ENCODE measurements at regions of chr7 and their contacts with region 1.

Region 1: DNA sequence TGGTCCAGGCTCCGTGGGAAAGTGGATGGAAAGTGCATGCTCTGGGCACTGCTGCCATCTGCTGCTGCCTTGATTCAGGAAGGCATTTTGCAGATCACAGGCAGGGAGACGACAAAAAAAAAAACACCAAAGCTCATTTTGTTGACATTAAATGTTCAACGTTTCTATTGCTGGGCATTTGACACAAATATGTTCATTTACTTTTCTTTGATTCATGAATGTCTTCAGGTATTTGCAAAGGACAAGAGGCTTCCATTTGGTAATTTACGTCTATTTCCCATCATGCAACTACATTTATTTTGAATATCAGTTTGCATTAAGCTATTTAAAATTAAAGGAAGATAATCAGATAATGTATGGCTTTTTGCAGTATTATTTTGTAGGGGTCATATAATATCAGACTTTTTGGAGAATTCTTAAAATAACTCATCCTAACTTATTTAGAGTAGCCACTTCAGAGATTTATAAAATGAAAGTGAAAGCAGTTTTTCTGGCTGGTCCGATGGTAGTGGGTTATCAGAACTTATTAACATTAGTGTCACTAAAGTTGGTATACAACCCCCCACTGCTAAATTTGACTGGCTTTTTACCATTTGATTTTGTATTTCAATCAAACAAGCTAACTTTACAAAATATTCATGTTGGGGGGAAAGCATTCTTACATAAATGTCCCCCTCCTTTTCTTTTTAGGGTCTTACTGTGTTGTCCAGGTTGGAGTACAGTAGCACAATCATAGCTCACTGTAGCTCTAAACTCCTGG is 65.3 kb downstream of the PDIA4 start:
- DNase-seq: peak; percentile 51
- H3K4me3 Mint-ChIP-seq: peak overlapping the region; percentile 86
- H3K27ac Mint-ChIP-seq: peak overlapping the region; percentile 77
- H3K4me1 Mint-ChIP-seq: peaks cover 25% of the 10 kb centered on the region
- H3K27me3 Mint-ChIP-seq: no peaks in the 10 kb centered on the region

Region 2: GRCh38 chr7:148503875-148504487 is 459.0 kb before region 1 on chr7:
- intact Hi-C with region 1: loop called (anchors 1 kb)
- DNase-seq: no peak
- H3K4me3 Mint-ChIP-seq: no peak overlapping the region
- H3K27ac Mint-ChIP-seq: no peak overlapping the region
- H3K4me1 Mint-ChIP-seq: peaks cover 23% of the 10 kb centered on the region
- H3K27me3 Mint-ChIP-seq: peaks cover 32% of the 10 kb centered on the region

Region 3: DNA sequence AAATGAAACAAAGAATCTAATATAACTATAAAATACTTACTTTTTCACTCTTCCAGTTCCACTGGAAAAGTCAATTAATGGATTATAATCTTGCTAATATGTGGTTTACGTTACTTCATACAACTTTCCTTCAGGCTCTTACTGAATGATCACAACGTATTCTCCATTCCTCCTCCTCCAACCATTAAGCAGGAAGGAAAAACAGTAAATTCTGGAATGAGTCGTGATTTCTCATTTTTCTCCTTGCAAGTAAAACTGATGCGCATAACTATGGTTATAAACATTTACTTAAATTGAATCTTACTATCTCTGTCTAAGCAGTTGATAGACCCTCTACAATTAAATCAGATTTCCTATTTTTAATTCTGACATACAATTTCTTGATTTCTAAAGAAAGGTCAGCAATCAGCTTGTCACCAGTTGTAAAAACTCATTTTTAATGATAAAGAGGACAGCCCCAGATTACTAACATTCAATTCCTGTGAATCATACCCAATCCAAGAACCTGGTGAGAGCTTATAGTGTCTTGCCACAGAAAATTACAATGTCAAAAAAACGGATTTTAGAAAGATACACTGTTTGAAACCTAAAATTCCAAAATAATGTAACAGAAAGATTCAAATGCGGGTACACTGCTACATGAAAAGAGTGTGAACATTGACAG is 143.2 kb before region 1 on chr7:
- intact Hi-C with region 1: loop called (anchors 2 kb)
- DNase-seq: no peak
- H3K4me3 Mint-ChIP-seq: no peak overlapping the region
- H3K27ac Mint-ChIP-seq: no peak overlapping the region
- H3K4me1 Mint-ChIP-seq: peaks cover 5% of the 10 kb centered on the region
- H3K27me3 Mint-ChIP-seq: no peaks in the 10 kb centered on the region

Region 4: GRCh38 chr7:148849393-148850098 is 113.5 kb before region 1 on chr7:
- intact Hi-C with region 1: no loop called
- DNase-seq: no peak
- H3K4me3 Mint-ChIP-seq: no peak overlapping the region
- H3K27ac Mint-ChIP-seq: peak overlapping the region; percentile 31
- H3K4me1 Mint-ChIP-seq: peaks cover 61% of the 10 kb centered on the region
- H3K27me3 Mint-ChIP-seq: no peaks in the 10 kb centered on the region

Region 5: DNA sequence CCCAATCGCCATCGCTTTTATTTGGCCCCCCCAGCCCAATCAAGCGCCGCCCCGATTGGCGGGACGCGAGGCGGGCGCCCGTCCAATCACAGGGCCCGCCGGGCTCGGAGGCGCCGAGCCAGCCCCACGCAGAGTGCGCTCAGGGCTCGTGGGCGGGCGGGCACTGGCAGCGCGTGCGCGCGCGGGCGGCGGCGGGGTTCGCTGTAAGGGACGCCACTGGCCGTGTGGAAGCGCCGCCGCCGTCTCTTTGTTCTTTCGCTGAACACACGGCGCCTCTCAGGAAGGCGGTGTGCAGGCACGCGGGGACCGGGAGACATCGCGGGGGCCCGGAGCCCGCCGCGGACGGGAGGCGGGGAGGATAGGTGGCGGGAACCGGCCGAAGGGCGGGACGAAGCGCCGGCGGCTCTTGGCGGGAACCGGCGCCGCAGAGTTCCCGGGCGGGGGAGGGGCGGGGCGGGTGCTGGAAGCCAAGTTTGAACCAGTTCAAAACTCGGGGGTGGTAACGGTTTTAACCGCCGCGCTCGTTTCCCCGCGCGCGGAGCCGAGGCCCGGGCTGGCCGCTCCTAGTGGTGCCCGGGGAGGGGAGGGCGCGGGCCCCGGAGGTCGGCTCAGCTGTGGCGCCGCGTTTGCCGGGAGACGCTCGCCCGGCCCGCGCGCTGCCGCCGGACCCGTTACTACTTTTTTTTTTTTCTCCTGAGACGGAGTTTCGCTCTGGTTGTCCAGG is 78.5 kb before region 1 on chr7:
- intact Hi-C with region 1: loop called (anchors 1 kb)
- DNase-seq: peak; percentile 92
- H3K4me3 Mint-ChIP-seq: peak overlapping the region; percentile 94
- H3K27ac Mint-ChIP-seq: peak overlapping the region; percentile 98
- H3K4me1 Mint-ChIP-seq: peaks cover 29% of the 10 kb centered on the region
- H3K27me3 Mint-ChIP-seq: no peaks in the 10 kb centered on the region

Region 6: DNA sequence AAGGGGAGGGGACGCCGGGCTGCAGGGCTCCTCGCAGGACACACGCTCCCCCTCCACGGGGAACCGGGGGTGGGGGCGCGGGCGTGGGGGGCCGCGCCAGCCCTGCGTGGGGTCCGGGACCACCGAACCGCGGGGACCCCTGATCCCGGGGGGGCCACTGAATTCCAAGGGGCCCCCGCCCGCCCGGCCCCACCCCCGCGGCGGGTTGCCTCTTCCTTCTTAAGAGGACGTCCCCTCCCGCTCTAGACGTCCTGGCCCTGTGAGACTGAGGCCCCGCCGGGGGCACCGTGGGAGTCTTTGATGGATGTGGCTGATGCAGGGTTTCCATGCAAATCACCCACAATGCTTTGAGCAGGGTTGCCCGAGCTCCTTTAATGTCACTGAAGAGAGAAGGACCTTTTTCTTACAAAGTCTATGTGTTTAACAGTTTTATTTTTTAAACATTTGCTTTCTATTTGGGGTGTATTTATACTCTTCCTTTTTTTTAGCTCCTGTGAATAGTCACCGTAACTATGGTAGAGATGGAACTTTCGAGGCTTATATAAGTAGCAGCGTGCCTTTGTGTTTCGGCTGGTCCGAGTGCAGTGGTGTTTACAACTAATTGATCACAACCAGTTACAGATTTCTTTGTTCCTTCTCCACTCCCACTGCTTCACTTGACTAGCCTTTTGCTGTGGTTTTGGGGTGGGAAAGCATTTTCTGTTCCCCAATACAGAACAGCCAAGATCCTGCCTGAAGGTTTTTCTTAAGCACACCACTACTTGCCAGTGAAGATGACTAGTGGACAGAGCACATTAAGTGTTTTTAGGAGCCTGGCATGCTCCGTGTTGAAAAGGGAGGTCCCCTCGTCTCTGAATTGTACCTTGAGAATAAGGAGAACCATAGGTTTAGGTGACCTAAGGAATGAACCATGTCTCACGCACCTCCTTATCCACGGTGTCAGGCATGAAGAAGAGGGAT is 20.5 kb after region 1 on chr7:
- intact Hi-C with region 1: loop called (anchors 1 kb)
- DNase-seq: peak; percentile 71
- H3K4me3 Mint-ChIP-seq: peak overlapping the region; percentile 97
- H3K27ac Mint-ChIP-seq: peak overlapping the region; percentile 85
- H3K4me1 Mint-ChIP-seq: peaks cover 39% of the 10 kb centered on the region
- H3K27me3 Mint-ChIP-seq: peaks cover 5% of the 10 kb centered on the region

Region 7: DNA sequence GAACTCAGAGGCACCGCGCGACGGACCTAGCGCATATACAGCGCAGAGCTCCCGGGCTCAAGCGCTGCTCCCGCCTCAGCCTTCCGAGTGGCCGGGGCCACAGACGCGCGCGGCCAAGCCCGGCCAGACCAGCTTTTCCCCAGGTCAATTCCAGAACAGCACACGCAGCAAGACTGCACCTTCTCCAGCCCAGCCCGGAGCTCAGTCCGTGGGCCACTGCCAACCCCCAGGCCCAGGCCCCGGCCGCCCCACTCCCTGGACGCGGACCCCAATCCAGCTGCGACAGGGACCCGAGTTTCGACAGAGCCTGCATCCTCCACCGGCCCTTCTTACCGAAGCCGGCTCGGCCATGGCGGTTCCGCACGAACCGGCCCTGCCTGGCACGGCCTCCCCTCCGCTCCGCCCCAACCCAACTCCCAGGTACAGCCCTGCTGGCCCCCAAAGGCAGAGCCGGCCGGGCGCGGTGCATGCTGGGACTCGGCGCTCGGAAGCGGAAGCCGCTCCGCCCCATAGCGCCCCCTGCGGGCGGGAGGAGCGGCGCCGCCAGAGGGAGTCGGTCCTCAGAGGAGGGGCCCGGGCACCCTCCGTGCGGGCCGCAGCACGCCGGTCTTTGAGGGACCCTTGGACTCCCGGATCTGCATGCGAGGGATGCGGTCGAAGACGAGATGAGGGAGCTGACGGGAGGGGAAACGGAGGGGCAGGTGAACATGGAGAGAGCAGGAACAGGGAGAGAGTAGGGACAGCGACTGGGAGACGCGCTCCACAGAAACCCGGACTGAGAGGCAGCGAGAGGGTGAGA is 163.1 kb after region 1 on chr7 and contains the start of gene ZNF425:
- intact Hi-C with region 1: no loop called
- DNase-seq: peak; percentile 91
- H3K4me3 Mint-ChIP-seq: peak within 1 kb of the TSS; percentile 100
- H3K27ac Mint-ChIP-seq: peak within 1 kb of the TSS; percentile 100
- H3K4me1 Mint-ChIP-seq: peaks cover 19% of the 10 kb centered on the region
- H3K27me3 Mint-ChIP-seq: no peaks in the 10 kb centered on the region
- total RNA-seq, gene ZNF425: 0.39 and 1.0 TPM in 2 replicates

Measured in activated T-helper 2 cell treated with anti-CD3 and anti-CD28 coated beads, Interferon-gamma antibody, Interleukin-2, Interleukin-4, amounts not matched to agents 10 μg/mL and 5 μg/mL and 100 μg/mL, durations not matched to agents 14 hours and 24 hours and 36 hours (primary cell).